ENCODE measurements at regions of chr14 and their contacts with region 1.

Region 1: DNA sequence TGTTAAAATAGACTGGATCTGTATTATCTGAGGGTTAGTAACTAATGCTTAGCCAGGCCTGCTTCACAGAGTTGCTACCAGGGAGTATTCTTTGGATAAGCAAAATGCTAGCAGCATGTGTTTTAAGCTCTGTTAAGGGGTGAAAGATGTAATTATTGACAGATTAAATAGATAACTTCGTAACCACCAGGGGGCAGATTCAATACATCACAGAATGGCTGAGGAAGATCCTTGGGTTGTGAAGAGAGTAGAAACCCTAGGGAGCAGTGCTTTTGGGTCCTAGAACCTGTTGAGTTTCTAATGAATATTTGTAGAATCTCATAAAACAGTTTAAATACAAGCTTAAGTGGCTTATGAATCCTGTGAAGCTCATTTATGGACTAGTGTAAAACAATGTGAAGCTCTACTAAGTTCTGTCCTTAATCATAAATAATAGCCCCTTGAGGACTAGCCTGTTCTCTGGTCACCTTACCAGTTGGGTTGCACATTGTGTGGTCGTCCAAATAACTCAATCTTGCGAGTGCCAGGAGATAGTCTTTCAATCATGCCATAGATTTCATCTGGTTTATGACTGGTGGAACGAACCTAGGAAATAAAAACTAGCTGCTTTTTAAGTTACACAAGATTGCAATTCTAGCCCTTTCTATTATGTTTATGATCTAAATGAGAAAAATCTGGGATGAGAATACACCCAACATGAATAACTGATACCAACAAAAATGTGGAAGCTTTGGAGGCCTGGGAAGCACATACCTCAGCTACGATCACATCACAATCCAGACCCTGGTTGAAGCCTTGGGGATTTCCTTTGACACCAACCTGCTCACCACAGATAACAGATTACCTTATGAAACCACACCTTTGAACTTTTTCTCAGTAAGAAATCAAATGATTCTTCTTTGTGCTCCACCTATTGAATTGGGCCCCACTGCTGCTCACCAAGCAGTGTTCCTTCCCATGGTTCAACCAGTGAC is 12.3 kb downstream of the METTL3 start:
- DNase-seq: no peak
- ATAC-seq: peak; percentile 89
- H3K4me3 ChIP-seq: no peak overlapping the region
- H3K27ac ChIP-seq: 0 out of 2 replicates have a peak overlapping the region, but pooled peaks have one; percentile 2
- H3K4me1 ChIP-seq: no peaks in the 10 kb centered on the region
- H3K27me3 ChIP-seq: no peaks in the 10 kb centered on the region
- CTCF ChIP-seq: peak; percentile 34 to 61 (median 42)
- EP300 ChIP-seq: peak; percentile 15; a peak in 1 of 4 replicates
- POLR2A ChIP-seq: no peak
- RAD21 ChIP-seq: peak; percentile 74

Region 2: GRCh38 chr14:21476925-21477681 is 21.7 kb before region 1 on chr14 and contains the starts of genes RAB2B and TOX4:
- CTCF ChIA-PET with region 1: interaction called, 30 read pairs
- POLR2A ChIA-PET with region 1: interaction called, 4 read pairs
- RAD21 ChIA-PET with region 1: interaction called, 7 read pairs
- SMC1A ChIA-PET with region 1: interaction called, 19 read pairs
- in situ Hi-C with region 1: no loop called
- intact Hi-C with region 1: no loop called
- DNase-seq: peak; percentile 94
- ATAC-seq: peak; percentile 98
- H3K4me3 ChIP-seq: peak within 1 kb of the TSS; percentile 99
- H3K27ac ChIP-seq: peak within 1 kb of the TSS; percentile 77
- H3K4me1 ChIP-seq: peaks cover 5% of the 10 kb centered on the region
- H3K27me3 ChIP-seq: no peaks in the 10 kb centered on the region
- CTCF ChIP-seq: peak; percentile 98 to 99 (median 99)
- EP300 ChIP-seq: peak in 1 of 2 experiments; percentile 46; a peak in 1 of 4 replicates
- POLR2A ChIP-seq: peak; percentile 91
- RAD21 ChIP-seq: peak; percentile 40; the same call in 1 of the 2 replicates
- polyA plus RNA-seq, gene RAB2B: 5.6 to 9.8 TPM
- polyA plus RNA-seq, gene TOX4: 54.7 to 55.5 TPM

Region 3: GRCh38 chr14:21510735-21511657 is 12.2 kb after region 1 on chr14 and contains the start of gene METTL3:
- CTCF ChIA-PET with region 1: interaction called, 80 read pairs
- POLR2A ChIA-PET with region 1: interaction called, 13 read pairs
- RAD21 ChIA-PET with region 1: interaction called, 31 read pairs
- SMC1A ChIA-PET with region 1: interaction called, 44 read pairs
- in situ Hi-C with region 1: no loop called
- intact Hi-C with region 1: no loop called
- DNase-seq: peak; percentile 97
- ATAC-seq: peak; percentile 98
- H3K4me3 ChIP-seq: peak within 1 kb of the TSS; percentile 94
- H3K27ac ChIP-seq: peak within 1 kb of the TSS; percentile 82
- H3K4me1 ChIP-seq: no peaks in the 10 kb centered on the region; the same call in 1 of the 2 replicates
- H3K27me3 ChIP-seq: no peaks in the 10 kb centered on the region
- CTCF ChIP-seq: no peak
- EP300 ChIP-seq: no peak
- POLR2A ChIP-seq: peak; percentile 87
- RAD21 ChIP-seq: no peak
- polyA plus RNA-seq, gene METTL3: 32.8 to 36.0 TPM

Region 4: GRCh38 chr14:21536418-21537089 is 37.7 kb after region 1 on chr14:
- CTCF ChIA-PET with region 1: interaction called, 20 read pairs
- POLR2A ChIA-PET with region 1: interaction called, 3 read pairs
- RAD21 ChIA-PET with region 1: interaction called, 13 read pairs
- SMC1A ChIA-PET with region 1: interaction called, 16 read pairs
- in situ Hi-C with region 1: no loop called
- intact Hi-C with region 1: no loop called
- DNase-seq: no peak
- ATAC-seq: peak; percentile 64
- H3K4me3 ChIP-seq: no peak overlapping the region
- H3K27ac ChIP-seq: no peak overlapping the region
- H3K4me1 ChIP-seq: no peaks in the 10 kb centered on the region
- H3K27me3 ChIP-seq: peaks cover 5 to 7% of the 10 kb centered on the region in 2 experiments
- CTCF ChIP-seq: no peak
- EP300 ChIP-seq: no peak
- POLR2A ChIP-seq: no peak
- RAD21 ChIP-seq: no peak

Region 5: DNA sequence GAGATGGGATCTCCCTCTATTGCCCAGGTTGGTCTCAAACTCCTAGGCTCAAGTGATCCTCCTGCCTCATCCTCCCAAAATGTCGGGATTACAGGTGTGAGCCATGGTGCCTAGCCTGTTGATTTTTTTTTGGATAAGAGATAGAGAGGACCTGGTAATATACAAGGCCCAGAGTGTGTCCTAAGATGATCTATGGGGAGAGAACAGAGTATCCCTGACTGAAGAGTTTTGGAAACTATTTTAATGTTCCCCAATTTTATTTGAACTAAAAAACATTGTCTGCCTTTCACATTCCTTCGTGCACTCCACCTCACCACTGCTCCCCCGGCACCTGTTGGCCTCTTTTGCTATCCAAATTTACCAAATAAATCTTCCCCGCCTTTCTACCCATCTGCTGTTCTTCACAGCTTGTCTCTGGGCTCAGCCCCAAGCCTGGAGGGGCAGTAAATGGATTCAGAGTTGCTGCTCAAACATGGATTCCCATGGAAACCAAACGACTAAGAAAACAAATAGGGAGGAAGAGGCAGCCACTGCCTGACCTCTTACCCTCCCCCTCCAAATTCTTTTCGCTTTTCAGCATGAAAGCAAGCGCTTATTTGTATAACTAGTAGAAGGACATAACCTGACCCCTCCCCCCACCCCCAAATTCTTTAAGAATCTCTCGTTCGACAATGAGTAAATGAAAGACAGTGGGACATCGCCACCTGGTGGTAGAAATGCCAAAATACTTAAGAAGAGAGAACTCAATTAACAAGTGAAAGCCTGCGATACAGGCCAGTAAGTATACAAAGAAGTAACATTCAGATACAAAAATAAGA is 58.5 kb after region 1 on chr14:
- CTCF ChIA-PET with region 1: interaction called, 207 read pairs
- POLR2A ChIA-PET with region 1: interaction called, 7 read pairs
- RAD21 ChIA-PET with region 1: interaction called, 141 read pairs
- SMC1A ChIA-PET with region 1: interaction called, 133 read pairs
- in situ Hi-C with region 1: loop called (anchors 5 kb)
- intact Hi-C with region 1: loop called (anchors 1 kb)
- DNase-seq: peak; percentile 61
- ATAC-seq: peak; percentile 87
- H3K4me3 ChIP-seq: peak overlapping the region; percentile 4; the same call in 1 of the 2 replicates
- H3K27ac ChIP-seq: no peak overlapping the region
- H3K4me1 ChIP-seq: no peaks in the 10 kb centered on the region
- H3K27me3 ChIP-seq: no peaks in the 10 kb centered on the region
- CTCF ChIP-seq: peak; percentile 48 to 74 (median 69)
- EP300 ChIP-seq: no peak
- POLR2A ChIP-seq: no peak
- RAD21 ChIP-seq: peak; percentile 92

Region 6: GRCh38 chr14:21868442-21869046 is 369.7 kb after region 1 on chr14:
- CTCF ChIA-PET with region 1: no interaction called
- POLR2A ChIA-PET with region 1: no interaction called
- RAD21 ChIA-PET with region 1: no interaction called
- SMC1A ChIA-PET with region 1: no interaction called
- in situ Hi-C with region 1: no loop called
- intact Hi-C with region 1: no loop called
- DNase-seq: no peak
- ATAC-seq: peak; percentile 93
- H3K4me3 ChIP-seq: no peak overlapping the region
- H3K27ac ChIP-seq: no peak overlapping the region
- H3K4me1 ChIP-seq: no peaks in the 10 kb centered on the region
- H3K27me3 ChIP-seq: no peaks in the 10 kb centered on the region
- CTCF ChIP-seq: peak; percentile 73 to 80 (median 78)
- EP300 ChIP-seq: no peak
- POLR2A ChIP-seq: no peak
- RAD21 ChIP-seq: peak; percentile 40; the same call in 1 of the 2 replicates